Activated CD4-positive, alpha-beta T cell treated with anti-CD3 and anti-CD28 coated beads, Interleukin-2, amount 10 ng/mL, durations not matched to agents 7 days and 5 days (primary cell): ENCODE measurements at regions of chr6 and their contacts with region 1.

Region 1: DNA sequence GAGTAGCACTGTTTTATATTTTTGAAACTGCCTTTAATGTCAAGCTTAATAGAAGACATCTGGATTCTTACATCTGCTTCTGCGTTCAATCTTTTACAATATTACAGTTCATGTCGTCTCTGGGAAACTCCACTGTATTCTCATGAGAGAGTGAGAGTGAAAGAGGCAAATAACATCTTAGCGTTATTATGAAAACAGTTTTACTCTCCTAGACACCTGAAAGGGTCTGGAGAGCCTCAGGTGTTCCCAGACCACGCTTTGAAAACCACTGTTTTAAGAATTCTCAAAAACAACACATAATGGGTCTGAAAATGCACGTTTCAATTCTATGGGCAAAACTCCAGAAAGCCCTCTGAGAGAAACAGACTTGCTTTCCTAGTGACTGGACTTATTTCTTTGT is 63.3 kb downstream of the ARHGAP18 start:
- DNase-seq: no peak
- H3K4me3 Mint-ChIP-seq: no peak overlapping the region
- H3K27ac Mint-ChIP-seq: no peak overlapping the region
- H3K4me1 Mint-ChIP-seq: peaks cover 4% of the 10 kb centered on the region
- H3K27me3 Mint-ChIP-seq: no peaks in the 10 kb centered on the region

Region 2: DNA sequence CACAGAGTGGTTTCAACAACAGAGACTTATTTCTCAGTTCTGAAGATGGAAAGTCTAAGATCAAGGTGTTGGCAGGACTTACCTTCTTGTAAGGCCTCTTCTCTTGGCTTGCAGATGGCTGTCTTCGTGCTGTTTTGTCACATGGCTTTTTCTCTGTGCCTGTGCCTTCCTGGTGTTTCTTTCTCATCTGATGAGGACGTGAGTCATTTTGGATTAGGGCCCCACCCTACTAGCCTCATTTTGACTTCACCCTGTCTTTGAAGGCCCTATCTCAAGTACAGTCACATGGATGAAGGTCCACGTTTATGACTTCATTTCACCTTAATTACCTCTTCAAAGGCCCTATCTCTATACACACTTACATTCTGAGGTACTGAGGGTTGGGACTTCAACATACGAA is 805.1 kb before region 1 on chr6:
- CTCF ChIA-PET with region 1: no interaction called
- POLR2A ChIA-PET with region 1: interaction called, 10 read pairs
- DNase-seq: no peak
- H3K4me3 Mint-ChIP-seq: no peak overlapping the region
- H3K27ac Mint-ChIP-seq: no peak overlapping the region
- H3K4me1 Mint-ChIP-seq: no peaks in the 10 kb centered on the region
- H3K27me3 Mint-ChIP-seq: no peaks in the 10 kb centered on the region

Region 3: DNA sequence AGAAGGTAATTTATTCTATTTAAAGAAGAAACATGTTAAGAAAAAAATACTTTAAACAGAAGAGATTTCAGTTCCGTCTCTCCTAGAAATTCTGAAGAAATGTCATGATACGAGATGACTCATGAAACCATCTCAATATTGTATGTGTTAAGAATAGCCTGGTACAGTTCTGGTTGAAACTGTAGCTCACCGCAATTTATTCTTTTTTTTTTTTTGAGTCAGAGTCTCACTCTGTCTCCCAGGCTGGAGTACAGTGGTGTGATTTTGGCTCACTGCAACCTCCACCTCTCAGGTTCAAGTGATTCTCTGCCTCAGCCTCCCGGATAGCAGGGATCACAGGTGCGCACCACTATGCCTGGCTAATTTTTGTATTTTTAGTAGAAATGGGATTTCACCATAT is 40.0 kb before region 1 on chr6:
- CTCF ChIA-PET with region 1: no interaction called
- POLR2A ChIA-PET with region 1: no interaction called
- DNase-seq: no peak
- H3K4me3 Mint-ChIP-seq: no peak overlapping the region
- H3K27ac Mint-ChIP-seq: no peak overlapping the region
- H3K4me1 Mint-ChIP-seq: peaks cover 5% of the 10 kb centered on the region
- H3K27me3 Mint-ChIP-seq: no peaks in the 10 kb centered on the region

Region 4: DNA sequence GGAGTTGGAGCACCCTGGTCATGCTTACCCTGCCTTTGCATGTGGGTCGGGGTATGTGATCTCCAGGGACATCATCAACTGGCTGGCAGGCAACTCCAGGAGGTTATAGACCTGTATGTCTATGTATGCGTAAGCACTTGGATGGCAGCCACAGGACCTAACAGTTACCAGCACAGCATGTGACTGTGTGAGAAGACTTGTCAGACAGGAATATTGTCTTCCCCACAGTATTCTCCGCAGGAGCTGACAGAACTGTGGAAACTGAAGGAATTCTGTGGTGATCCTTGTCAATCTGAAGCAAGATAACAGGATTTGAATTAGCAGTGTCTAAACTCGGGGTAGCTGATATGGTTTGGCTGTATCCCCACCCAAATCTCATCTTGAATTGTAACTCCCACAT is 155.3 kb after region 1 on chr6:
- CTCF ChIA-PET with region 1: no interaction called
- POLR2A ChIA-PET with region 1: no interaction called
- DNase-seq: no peak
- H3K4me3 Mint-ChIP-seq: no peak overlapping the region
- H3K27ac Mint-ChIP-seq: no peak overlapping the region
- H3K4me1 Mint-ChIP-seq: no peaks in the 10 kb centered on the region
- H3K27me3 Mint-ChIP-seq: peaks cover 2% of the 10 kb centered on the region